A673 (cell line): ENCODE measurements at regions of chr12 and their contacts with region 1.

Region 1: DNA sequence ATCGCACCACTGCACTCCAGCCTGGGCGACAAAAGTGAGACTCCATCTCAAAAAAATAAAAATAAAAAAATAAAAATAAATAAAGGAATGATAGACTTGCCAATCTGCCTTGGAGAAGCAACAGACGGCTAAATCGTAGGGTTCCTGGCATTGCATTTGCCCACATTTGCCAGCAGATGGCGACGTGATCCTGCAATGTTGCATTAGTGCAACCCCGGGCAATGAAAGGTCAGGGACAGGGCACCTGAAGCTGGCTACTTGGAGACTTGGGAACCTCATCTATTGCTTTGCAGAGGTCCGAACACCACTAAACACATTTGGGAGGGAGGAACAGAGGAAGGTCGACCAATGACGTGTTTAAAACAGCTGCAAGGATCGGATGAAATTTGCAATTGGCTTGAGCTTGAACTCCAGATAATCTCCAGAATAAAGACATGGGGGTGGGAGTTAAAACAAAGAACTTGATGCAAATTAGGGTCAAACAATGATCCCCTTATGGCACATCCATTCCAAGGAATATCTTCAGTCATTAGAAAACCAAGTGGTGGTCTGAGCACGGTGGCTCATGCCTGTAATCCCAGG is 34.6 kb downstream of the SPRING1 start:
- DNase-seq: peak; percentile 63
- H3K4me3 ChIP-seq: no peak overlapping the region
- H3K27ac ChIP-seq: no peak overlapping the region
- H3K4me1 ChIP-seq: peaks cover under 1% of the 10 kb centered on the region
- H3K27me3 ChIP-seq: no peaks in the 10 kb centered on the region
- CTCF ChIP-seq: peak; percentile 92

Region 2: DNA sequence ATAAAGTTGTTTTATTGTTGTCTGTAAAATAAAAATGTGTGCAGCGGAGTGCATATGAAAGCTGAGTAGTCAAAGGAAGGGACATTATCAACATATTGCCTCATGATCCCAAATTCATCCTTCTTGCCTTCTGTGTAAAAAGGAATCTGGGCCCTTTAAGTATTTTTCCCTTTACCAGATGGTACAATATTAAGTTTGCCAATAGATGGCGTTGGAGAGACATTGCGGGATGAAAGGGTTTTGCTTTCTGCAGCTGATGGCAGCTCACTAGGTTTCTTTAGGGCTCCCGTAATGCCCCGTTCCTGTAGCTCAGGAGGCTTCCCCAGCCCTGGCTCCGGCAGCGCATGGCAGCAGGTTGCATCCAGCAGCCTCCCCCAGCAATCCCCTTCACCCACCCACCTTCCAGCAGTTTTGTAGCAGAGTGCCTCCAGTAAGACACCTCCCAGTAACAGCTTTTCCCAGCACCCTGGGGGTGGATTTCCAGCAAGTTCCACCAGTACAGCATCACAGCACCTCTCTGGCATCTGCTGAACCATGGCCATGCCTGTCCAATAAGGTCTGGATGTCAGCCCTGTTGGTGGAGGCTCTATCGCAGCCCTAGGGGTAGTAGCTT is 780.2 kb before region 1 on chr12:
- CTCF ChIA-PET with region 1: no interaction called
- POLR2A ChIA-PET with region 1: no interaction called
- intact Hi-C with region 1: loop called (anchors 10 kb)
- DNase-seq: peak; percentile 64
- H3K4me3 ChIP-seq: no peak overlapping the region
- H3K27ac ChIP-seq: no peak overlapping the region
- H3K4me1 ChIP-seq: no peaks in the 10 kb centered on the region
- H3K27me3 ChIP-seq: no peaks in the 10 kb centered on the region
- CTCF ChIP-seq: peak; percentile 51

Region 3: DNA sequence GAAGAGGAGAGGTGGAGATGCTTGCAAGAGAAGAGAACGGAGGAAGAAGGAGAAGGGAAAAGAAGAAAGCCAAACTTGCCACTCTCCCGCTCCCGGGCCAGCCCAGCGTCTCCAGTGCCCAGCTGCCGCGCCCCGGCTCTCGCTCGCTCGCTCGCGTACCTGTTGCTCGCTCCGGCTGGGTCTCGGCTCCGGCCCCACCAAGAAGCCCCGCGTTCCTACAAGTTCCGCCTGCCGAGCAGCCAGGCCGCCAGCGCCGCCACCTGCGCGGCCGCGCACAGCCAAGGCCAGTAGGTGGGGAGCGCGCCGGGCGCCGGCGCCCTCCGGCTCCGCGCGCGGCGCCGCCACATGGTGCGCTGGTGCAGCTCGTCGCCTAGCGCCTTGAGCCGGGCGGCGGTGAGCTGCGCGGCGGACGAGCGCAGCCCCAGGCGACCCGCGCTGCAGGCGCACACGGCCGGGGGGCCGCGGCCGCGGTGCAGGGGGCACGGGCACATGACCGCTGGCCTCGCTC is 177.6 kb after region 1 on chr12:
- CTCF ChIA-PET with region 1: interaction called, 13 read pairs
- POLR2A ChIA-PET with region 1: no interaction called
- intact Hi-C with region 1: loop called (anchors 2 kb)
- DNase-seq: peak; percentile 67
- H3K4me3 ChIP-seq: peak overlapping the region; percentile 40
- H3K27ac ChIP-seq: no peak overlapping the region
- H3K4me1 ChIP-seq: peaks cover 27% of the 10 kb centered on the region
- H3K27me3 ChIP-seq: peaks cover 63% of the 10 kb centered on the region
- CTCF ChIP-seq: no peak

Region 4: GRCh38 chr12:117119592-117120198 is 416.4 kb after region 1 on chr12:
- CTCF ChIA-PET with region 1: interaction called, 4 read pairs
- POLR2A ChIA-PET with region 1: no interaction called
- intact Hi-C with region 1: loop called (anchors 10 kb)
- DNase-seq: peak; percentile 42
- H3K4me3 ChIP-seq: no peak overlapping the region
- H3K27ac ChIP-seq: no peak overlapping the region
- H3K4me1 ChIP-seq: no peaks in the 10 kb centered on the region
- H3K27me3 ChIP-seq: no peaks in the 10 kb centered on the region
- CTCF ChIP-seq: peak; percentile 80

Region 5: DNA sequence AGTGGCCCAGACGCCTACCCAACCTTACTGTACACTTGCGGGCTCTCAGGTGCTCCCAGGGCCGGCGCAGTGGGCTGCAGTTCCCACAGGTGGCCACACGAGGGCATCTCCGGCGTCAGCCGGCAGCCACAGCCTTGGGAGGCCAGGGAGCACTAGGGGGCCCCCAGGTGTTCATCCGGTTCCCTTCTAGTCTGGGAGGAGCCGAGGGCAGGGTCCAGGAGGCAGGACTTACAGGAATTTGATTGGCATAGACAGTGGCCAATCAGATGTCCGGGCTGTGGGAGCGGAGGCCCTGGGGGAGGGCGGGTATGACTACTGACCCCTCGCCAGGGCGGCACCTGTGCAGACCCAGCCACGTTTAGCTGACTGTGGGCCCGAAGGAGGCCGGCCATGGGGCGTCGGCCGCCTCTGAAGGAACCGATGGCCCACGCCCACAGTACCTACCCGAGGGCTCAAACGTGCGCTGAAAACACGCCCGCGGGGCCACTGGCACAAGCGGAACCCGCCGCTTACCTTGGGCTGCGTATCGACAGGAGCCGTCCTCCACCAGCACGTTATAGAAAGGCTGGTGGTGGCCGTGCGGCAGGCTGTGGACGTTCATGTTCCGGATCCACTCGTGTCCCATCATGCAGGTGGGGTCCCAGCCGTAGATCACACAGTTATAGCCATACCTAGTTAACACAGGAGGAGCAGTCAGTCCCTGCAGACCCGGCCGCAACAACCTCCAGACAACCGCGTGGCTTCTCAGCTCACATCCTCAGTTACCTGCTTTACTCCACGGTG is 452.2 kb after region 1 on chr12:
- CTCF ChIA-PET with region 1: no interaction called
- POLR2A ChIA-PET with region 1: no interaction called
- intact Hi-C with region 1: loop called (anchors 10 kb)
- DNase-seq: peak; percentile 51
- H3K4me3 ChIP-seq: no peak overlapping the region
- H3K27ac ChIP-seq: no peak overlapping the region
- H3K4me1 ChIP-seq: no peaks in the 10 kb centered on the region
- H3K27me3 ChIP-seq: no peaks in the 10 kb centered on the region
- CTCF ChIP-seq: peak; percentile 82